MCF 10A (cell line): ENCODE measurements at regions of chr7 and their contacts with region 1.

Region 1: DNA sequence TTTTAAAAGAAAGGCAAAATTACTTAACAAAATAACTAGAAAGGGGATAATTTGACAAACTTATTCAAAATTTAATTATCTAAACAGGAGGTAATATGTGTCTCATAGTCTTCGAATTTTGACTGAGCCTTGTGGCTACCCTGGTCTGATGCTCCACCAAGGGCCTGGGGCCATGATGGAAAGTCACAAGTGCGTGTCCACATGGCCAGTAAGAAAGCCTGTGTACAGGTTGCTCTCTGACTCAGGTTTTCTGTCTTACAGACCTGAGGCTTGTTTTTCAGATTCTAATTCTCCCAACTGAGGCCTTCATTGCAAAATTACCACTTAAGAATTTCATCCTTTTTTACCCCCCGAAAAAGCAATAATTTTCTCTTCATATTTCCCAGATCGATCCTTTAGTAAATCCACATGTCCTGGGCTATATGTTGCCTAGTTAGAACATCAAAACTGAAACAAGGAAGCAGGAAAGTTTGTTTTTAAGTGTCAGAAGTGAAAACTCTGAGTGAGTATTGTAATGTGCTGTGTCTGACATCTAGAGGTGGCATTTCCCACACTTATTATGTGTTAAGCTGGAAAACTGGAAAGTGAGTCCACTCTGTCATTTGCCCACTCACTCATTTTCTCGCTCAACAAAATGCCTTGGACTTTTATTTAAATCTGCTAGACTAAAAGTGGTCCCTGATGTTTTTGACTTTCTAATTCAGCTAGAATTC is 10.0 kb downstream of the CYP3A43 start:
- DNase-seq: peak; percentile 30
- H3K4me3 Mint-ChIP-seq: no peak overlapping the region
- H3K27ac Mint-ChIP-seq: peak overlapping the region; percentile 36
- H3K4me1 Mint-ChIP-seq: peaks cover 7% of the 10 kb centered on the region
- H3K27me3 Mint-ChIP-seq: no peaks in the 10 kb centered on the region
- CTCF ChIP-seq: peak; percentile 48

Region 2: GRCh38 chr7:99648843-99649242 is 189.0 kb before region 1 on chr7:
- CTCF ChIA-PET with region 1: no interaction called
- POLR2A ChIA-PET with region 1: no interaction called
- intact Hi-C with region 1: no loop called
- DNase-seq: no peak
- H3K4me3 Mint-ChIP-seq: no peak overlapping the region
- H3K27ac Mint-ChIP-seq: no peak overlapping the region
- H3K4me1 Mint-ChIP-seq: no peaks in the 10 kb centered on the region
- H3K27me3 Mint-ChIP-seq: no peaks in the 10 kb centered on the region
- CTCF ChIP-seq: no peak

Region 3: DNA sequence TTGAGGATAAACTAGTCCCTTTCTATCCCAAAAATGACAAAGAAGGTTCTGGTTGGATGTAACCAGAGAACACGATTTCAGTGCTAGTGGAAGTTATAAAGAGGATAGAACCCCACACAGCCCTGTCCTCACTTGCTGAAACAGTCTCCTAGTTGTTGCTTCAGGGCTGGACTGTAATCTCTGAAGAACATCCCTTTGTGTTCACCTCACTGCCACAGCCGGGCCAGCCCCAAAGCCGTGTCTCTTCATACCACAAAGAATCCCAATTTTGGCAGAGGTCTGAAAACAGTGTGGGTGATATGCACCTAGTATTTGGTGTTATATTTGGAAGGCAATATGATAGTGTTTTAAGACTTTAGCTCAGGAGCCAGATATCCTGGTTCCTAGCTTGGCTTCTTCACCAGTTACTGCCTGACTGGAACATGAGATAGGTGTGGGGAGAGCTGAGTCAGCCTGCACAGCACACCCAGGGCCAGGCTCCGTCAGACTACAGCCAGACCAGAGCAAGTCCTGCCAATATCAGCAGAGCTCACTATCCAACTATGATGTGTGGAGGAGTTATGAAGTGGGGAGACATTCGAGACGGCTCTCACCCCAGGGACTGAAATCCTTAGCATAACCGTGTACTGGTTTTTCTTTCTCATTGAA is 75.0 kb before region 1 on chr7:
- CTCF ChIA-PET with region 1: interaction called, 5 read pairs
- POLR2A ChIA-PET with region 1: interaction called, 11 read pairs
- intact Hi-C with region 1: no loop called
- DNase-seq: peak; percentile 57
- H3K4me3 Mint-ChIP-seq: peak overlapping the region; percentile 19
- H3K27ac Mint-ChIP-seq: peak overlapping the region; percentile 56
- H3K4me1 Mint-ChIP-seq: peaks cover 16% of the 10 kb centered on the region
- H3K27me3 Mint-ChIP-seq: no peaks in the 10 kb centered on the region
- CTCF ChIP-seq: no peak

Region 4: GRCh38 chr7:100109521-100110162 is 271.8 kb after region 1 on chr7:
- CTCF ChIA-PET with region 1: no interaction called
- POLR2A ChIA-PET with region 1: no interaction called
- intact Hi-C with region 1: no loop called
- DNase-seq: no peak
- H3K4me3 Mint-ChIP-seq: no peak overlapping the region
- H3K27ac Mint-ChIP-seq: no peak overlapping the region
- H3K4me1 Mint-ChIP-seq: no peaks in the 10 kb centered on the region
- H3K27me3 Mint-ChIP-seq: no peaks in the 10 kb centered on the region
- CTCF ChIP-seq: no peak